Adrenal gland (tissue), 19 donors: ENCODE measurements at regions of chr3 and their contacts with region 1.

Region 1: GRCh38 chr3:57227204-57227929 is at the start of gene APPL1:
- DNase-seq: peak; percentile 89 to 95 (median 94)
- H3K4me3 ChIP-seq: peak within 1 kb of the TSS; percentile 38 to 85 (median 74)
- H3K27ac ChIP-seq: peak within 1 kb of the TSS; percentile 79 to 96 (median 81)
- H3K4me1 ChIP-seq: peaks cover 15 to 34% of the 10 kb centered on the region in 2 donors
- H3K27me3 ChIP-seq: no peaks in the 10 kb centered on the region
- CTCF ChIP-seq: no peak
- POLR2A ChIP-seq: peak; percentile 55 to 83
- total RNA-seq, gene APPL1: 21.5 to 45.7 (median 38.2) TPM

Region 2: DNA sequence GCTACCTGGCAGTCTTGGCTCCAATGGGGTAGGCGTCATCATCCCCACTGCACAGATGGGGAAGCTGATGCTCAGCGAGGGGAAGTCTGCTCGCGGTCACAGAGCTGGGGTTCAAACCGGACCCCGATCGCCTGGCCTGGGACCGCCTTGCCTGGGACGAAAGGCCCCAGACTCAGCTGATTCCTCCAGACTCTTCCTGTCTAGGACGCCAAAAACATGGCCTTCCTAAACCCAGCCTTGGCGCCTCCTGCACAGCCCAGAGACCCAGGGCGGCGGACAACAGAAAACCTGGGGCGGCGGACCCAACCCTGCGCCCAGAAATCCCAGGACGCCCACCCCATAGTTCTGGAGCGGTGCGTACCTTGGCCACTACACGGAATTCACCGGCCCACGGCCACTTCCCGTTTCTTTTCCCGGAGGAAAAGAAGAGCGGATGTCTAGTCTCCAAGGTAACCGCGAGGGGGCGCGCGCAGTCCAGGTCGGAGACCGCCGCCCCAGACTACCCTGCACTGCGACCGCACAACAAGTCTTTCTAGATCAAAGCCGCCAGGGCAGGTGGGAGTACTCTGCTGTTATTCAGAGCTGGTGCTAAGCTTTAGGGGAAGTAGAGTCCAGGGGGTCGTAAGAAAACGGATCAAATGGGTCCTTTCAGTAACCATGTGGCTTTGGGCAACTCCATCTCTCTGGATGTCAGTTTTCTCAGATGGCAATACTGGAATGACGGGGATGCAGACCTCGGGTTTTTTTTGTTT is 57.3 kb before region 1 on chr3:
- intact Hi-C with region 1: loop called in 1 of 2 experiments (anchors 10 kb)
- DNase-seq: peak; percentile 52 to 82 (median 77)
- H3K4me3 ChIP-seq: peak overlapping the region in 2 of 4 donors; percentile 21 to 73
- H3K27ac ChIP-seq: no peak overlapping the region
- H3K4me1 ChIP-seq: no peaks in the 10 kb centered on the region
- H3K27me3 ChIP-seq: no peaks in the 10 kb centered on the region
- CTCF ChIP-seq: peak; percentile 61 to 85 (median 79)
- POLR2A ChIP-seq: no peak

Region 3: GRCh38 chr3:58249358-58250092 is 1022.2 kb after region 1 on chr3:
- intact Hi-C with region 1: no loop called
- DNase-seq: no peak
- H3K4me3 ChIP-seq: no peak overlapping the region
- H3K27ac ChIP-seq: peak overlapping the region in 1 of 5 donors; percentile 31
- H3K4me1 ChIP-seq: peaks cover 0 to 13% of the 10 kb centered on the region in 2 donors
- H3K27me3 ChIP-seq: no peaks in the 10 kb centered on the region
- CTCF ChIP-seq: peak in 1 of 6 experiments; percentile 11
- POLR2A ChIP-seq: no peak